ENCODE measurements at regions of chr5 and their contacts with region 1.

Region 1: GRCh38 chr5:151825445-151825844 is 53.7 kb downstream of the G3BP1 start:
- DNase-seq: no peak

Region 2: DNA sequence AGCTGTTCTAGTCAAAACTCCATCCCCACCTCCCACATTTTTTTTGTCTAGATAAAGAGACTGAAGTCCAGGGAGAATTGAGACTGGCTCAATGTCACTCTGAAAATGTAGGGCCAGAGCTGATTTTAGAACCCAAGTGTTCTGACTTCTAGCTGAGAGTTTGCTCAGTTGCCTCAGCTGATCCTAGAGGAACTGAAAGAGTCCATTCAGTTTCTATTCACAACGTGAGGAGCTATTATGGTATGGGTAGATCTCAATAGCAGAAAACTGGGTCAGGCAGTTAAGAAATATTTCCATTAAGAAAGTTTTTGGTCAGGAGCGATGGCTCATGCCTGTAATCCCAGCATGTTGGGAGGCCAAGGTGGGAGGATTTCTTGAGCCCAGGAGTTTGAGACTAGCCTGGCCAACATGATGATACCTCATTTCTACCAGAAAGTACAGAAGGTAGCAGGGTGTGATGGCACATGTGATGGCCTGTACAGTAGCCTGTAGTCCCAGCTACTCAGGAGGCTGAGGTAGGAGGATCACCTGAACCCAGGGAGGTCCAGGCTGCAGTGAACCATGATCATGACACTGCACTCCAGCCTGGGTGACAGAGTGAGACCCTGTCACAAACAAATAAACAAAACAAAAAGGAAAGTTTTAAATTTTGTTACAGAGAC is 37.5 kb after region 1 on chr5:
- intact Hi-C with region 1: loop called in 1 of 2 experiments (anchors 1 kb)
- DNase-seq: no peak

Region 3: DNA sequence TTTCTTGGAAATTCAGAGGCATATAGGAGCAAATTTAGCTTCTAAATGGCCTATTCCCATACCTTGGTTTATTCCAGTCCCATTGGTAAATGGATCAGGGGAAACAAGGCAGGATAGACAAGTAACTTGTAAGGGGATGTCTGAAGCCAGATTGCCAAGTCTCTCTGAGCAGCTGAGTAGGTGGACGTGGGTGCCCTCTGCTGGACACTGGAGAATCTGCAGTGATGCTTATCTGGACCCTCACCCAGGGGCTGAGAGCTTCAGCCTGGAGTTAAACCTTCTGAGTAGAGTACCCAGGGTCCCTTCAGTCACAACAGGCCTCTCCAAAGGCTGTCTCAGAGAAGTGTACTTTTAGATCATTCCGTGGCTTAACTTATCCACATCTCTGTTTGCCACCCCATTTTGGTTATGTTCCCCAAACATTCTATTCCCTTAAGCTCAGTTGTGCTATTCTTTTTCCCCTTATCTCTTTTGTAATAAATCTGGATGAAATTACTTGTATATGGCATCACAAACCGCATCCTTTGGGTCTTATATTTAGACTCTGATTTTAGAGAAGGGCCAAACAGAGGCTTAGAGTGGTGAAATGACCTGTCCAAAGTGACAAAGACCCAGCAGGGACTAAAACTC is 317.5 kb after region 1 on chr5:
- intact Hi-C with region 1: loop called (anchors 5 to 10 kb)
- DNase-seq: peak; percentile 85

Region 4: GRCh38 chr5:152271420-152271819 is 446.0 kb after region 1 on chr5:
- intact Hi-C with region 1: loop called in 1 of 2 experiments (anchors 5 kb)
- DNase-seq: no peak